B cell (primary cell): ENCODE measurements at regions of chr9 and their contacts with region 1.

Region 1: GRCh38 chr9:97921959-97922724 is at the start of gene TRMO:
- DNase-seq: peak; percentile 100
- ATAC-seq: peak; percentile 78
- H3K4me3 ChIP-seq: peak within 1 kb of the TSS; percentile 47 to 89 (median 77)
- H3K4me3 Mint-ChIP-seq: peak within 1 kb of the TSS; percentile 87
- H3K27ac ChIP-seq: peak within 1 kb of the TSS; percentile 98 to 99
- H3K27ac Mint-ChIP-seq: peak within 1 kb of the TSS; percentile 97
- H3K4me1 ChIP-seq: peaks cover 26 to 32% of the 10 kb centered on the region in 2 donors
- H3K4me1 Mint-ChIP-seq: peaks cover 54% of the 10 kb centered on the region
- H3K27me3 ChIP-seq: no peaks in the 10 kb centered on the region
- H3K27me3 Mint-ChIP-seq: no peaks in the 10 kb centered on the region
- CTCF ChIP-seq: peak; percentile 74
- total RNA-seq, gene TRMO: 40.2 and 42.3 TPM in 2 replicates

Region 2: GRCh38 chr9:97632985-97633858 is 288.9 kb before region 1 on chr9 and contains the starts of genes NCBP1 and TSTD2:
- CTCF ChIA-PET with region 1: interaction called, 3 read pairs
- POLR2A ChIA-PET with region 1: interaction called, 8 read pairs
- intact Hi-C with region 1: loop called (anchors 1 kb)
- DNase-seq: peak; percentile 99
- ATAC-seq: peak; percentile 91
- H3K4me3 ChIP-seq: peak within 1 kb of the TSS; percentile 94 to 99 (median 95)
- H3K4me3 Mint-ChIP-seq: peak within 1 kb of the TSS; percentile 97
- H3K27ac ChIP-seq: peak within 1 kb of the TSS; percentile 92 to 93
- H3K27ac Mint-ChIP-seq: peak within 1 kb of the TSS; percentile 98
- H3K4me1 ChIP-seq: peaks cover 26 to 35% of the 10 kb centered on the region in 2 donors
- H3K4me1 Mint-ChIP-seq: peaks cover 58% of the 10 kb centered on the region
- H3K27me3 ChIP-seq: no peaks in the 10 kb centered on the region
- H3K27me3 Mint-ChIP-seq: no peaks in the 10 kb centered on the region
- CTCF ChIP-seq: no peak
- total RNA-seq, gene NCBP1: 38.0 and 40.7 TPM in 2 replicates
- total RNA-seq, gene TSTD2: 29.2 and 31.1 TPM in 2 replicates

Region 3: DNA sequence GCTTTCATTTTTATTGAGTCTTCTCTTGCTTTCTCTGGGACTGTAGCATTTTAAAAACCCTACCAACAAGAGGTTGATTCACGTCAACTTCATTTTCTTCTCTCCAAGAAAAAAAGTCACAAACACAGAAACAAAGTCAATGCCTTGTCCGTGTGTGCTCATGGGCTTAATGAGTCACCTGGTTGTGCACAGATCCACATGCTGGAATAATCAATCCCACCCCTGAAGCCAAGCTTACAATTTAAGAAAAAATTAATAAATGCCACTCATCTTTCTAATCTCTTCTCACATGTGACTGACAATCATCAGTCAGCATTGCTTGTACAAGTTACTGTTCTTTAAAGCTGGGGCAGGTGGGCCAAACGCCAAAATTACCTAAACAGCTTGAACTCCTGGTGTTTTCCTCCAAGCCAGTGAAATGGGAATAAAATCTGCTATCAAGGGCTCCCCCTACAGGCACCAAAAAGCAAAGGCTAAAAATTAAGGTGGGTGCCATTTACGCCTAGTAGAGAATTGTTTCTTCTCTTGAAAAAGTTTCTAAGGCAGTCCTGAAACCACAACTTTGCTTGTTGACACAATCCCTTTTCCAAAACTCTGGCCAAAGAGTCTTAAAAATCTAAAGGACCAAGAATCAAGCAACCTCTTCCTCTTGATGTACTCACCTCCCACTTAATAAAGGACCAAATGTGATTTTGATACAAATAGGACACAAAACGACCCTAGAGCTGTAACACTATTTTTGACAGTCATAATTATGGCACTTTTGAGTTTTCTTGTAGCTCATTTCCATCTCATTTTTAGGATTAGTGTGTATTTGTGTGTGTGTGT is 21.2 kb before region 1 on chr9:
- CTCF ChIA-PET with region 1: interaction called, 24 read pairs
- POLR2A ChIA-PET with region 1: no interaction called
- intact Hi-C with region 1: no loop called
- DNase-seq: peak; percentile 60
- ATAC-seq: no peak
- H3K4me3 ChIP-seq: no peak overlapping the region
- H3K4me3 Mint-ChIP-seq: no peak overlapping the region
- H3K27ac ChIP-seq: no peak overlapping the region
- H3K27ac Mint-ChIP-seq: no peak overlapping the region
- H3K4me1 ChIP-seq: peaks cover 2 to 9% of the 10 kb centered on the region in 2 donors
- H3K4me1 Mint-ChIP-seq: peaks cover 17% of the 10 kb centered on the region
- H3K27me3 ChIP-seq: no peaks in the 10 kb centered on the region
- H3K27me3 Mint-ChIP-seq: no peaks in the 10 kb centered on the region
- CTCF ChIP-seq: peak; percentile 81

Region 4: DNA sequence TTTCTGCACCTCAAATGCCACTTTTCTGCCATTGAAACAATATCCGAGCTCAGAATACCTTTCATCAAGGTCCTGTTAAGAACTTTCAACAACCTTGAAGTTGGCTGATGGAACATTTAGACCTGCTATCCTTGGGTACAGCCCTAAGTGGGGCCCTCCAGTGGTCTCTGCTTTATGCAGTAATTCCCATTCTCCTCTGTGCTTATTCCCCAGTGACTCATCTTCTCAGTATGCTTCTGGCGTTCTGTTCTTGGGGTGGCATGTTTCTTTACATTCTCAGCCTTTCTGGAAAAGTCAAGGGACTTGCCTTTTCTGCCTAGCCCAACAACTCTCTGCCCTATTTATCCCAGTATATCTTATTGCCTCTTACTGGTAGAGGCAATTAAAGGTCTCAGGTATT is 68.1 kb after region 1 on chr9:
- CTCF ChIA-PET with region 1: interaction called, 45 read pairs
- POLR2A ChIA-PET with region 1: interaction called, 4 read pairs
- intact Hi-C with region 1: no loop called
- DNase-seq: no peak
- ATAC-seq: no peak
- H3K4me3 ChIP-seq: no peak overlapping the region
- H3K4me3 Mint-ChIP-seq: peak overlapping the region; percentile 18
- H3K27ac ChIP-seq: peak overlapping the region in 1 of 2 donors; percentile 39
- H3K27ac Mint-ChIP-seq: peak overlapping the region; percentile 51
- H3K4me1 ChIP-seq: peaks cover 58% of the 10 kb centered on the region in 2 donors
- H3K4me1 Mint-ChIP-seq: peaks cover 89% of the 10 kb centered on the region
- H3K27me3 ChIP-seq: no peaks in the 10 kb centered on the region
- H3K27me3 Mint-ChIP-seq: no peaks in the 10 kb centered on the region
- CTCF ChIP-seq: no peak

Region 5: GRCh38 chr9:98056269-98057137 is 134.4 kb after region 1 on chr9 and contains the start of gene NANS:
- CTCF ChIA-PET with region 1: interaction called, 20 read pairs
- POLR2A ChIA-PET with region 1: interaction called, 7 read pairs
- intact Hi-C with region 1: loop called (anchors 1 kb)
- DNase-seq: peak; percentile 92
- ATAC-seq: peak; percentile 97
- H3K4me3 ChIP-seq: peak within 1 kb of the TSS; percentile 76 to 85 (median 81)
- H3K4me3 Mint-ChIP-seq: peak within 1 kb of the TSS; percentile 99
- H3K27ac ChIP-seq: peak within 1 kb of the TSS; percentile 80 to 89
- H3K27ac Mint-ChIP-seq: peak within 1 kb of the TSS; percentile 95
- H3K4me1 ChIP-seq: peaks cover 8 to 18% of the 10 kb centered on the region in 2 donors
- H3K4me1 Mint-ChIP-seq: peaks cover 17% of the 10 kb centered on the region
- H3K27me3 ChIP-seq: no peaks in the 10 kb centered on the region
- H3K27me3 Mint-ChIP-seq: no peaks in the 10 kb centered on the region
- CTCF ChIP-seq: no peak
- total RNA-seq, gene NANS: 14.9 and 15.3 TPM in 2 replicates

Region 6: GRCh38 chr9:98263482-98264357 is 341.6 kb after region 1 on chr9:
- CTCF ChIA-PET with region 1: interaction called, 15 read pairs
- POLR2A ChIA-PET with region 1: interaction called, 3 read pairs
- intact Hi-C with region 1: loop called (anchors 1 kb)
- DNase-seq: peak; percentile 85
- ATAC-seq: peak; percentile 100
- H3K4me3 ChIP-seq: no peak overlapping the region
- H3K4me3 Mint-ChIP-seq: no peak overlapping the region
- H3K27ac ChIP-seq: no peak overlapping the region
- H3K27ac Mint-ChIP-seq: no peak overlapping the region
- H3K4me1 ChIP-seq: no peaks in the 10 kb centered on the region
- H3K4me1 Mint-ChIP-seq: no peaks in the 10 kb centered on the region
- H3K27me3 ChIP-seq: no peaks in the 10 kb centered on the region
- H3K27me3 Mint-ChIP-seq: peaks cover 21% of the 10 kb centered on the region
- CTCF ChIP-seq: peak; percentile 94